ENCODE measurements at regions of chr6 and their contacts with region 1.

Region 1: GRCh38 chr6:106077170-106077569 is 9.0 kb upstream of the PRDM1 start:
- DNase-seq: no peak
- H3K4me3 ChIP-seq: no peak overlapping the region
- CTCF ChIP-seq: no peak

Region 2: GRCh38 chr6:106005013-106005412 is 72.2 kb before region 1 on chr6:
- in situ Hi-C with region 1: loop called (anchors 5 kb)
- DNase-seq: no peak
- H3K4me3 ChIP-seq: no peak overlapping the region
- CTCF ChIP-seq: no peak

Region 3: GRCh38 chr6:106128981-106129781 is 52.0 kb after region 1 on chr6:
- in situ Hi-C with region 1: no loop called
- DNase-seq: peak; percentile 78
- H3K4me3 ChIP-seq: no peak overlapping the region
- CTCF ChIP-seq: no peak

Region 4: DNA sequence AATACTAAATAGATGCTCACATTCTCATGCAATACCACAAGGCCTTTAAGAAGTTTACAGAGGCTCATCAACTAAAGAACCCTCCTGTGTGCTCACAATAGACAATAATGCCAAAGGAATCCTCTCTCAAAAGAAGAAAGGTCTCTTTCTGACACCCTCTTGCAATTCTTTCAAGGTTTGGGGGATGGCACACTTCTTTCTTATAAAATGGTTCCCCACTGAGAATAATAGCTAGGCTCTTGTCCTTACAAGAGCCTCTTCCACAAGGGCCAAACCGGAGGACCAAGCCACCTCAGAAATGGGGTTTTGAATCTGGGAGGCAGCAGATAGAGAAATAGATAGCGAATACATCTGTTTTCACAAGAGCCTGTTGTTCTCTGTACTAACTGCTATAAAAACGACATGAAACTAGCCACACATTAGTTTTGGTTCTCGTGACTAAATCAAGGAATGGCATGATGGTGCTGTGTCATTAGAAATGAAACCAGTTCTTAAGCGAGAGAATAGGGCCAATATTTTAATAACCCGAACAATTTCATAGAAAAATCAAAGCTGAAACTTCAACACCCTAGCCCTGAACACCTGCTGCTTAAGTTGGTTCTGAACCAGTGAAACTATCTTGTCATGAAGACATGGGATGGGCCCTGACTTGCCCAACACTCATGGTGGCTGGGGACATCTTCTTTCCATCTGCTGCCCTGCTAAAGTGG is 90.1 kb after region 1 on chr6:
- in situ Hi-C with region 1: no loop called
- DNase-seq: no peak
- H3K4me3 ChIP-seq: no peak overlapping the region
- CTCF ChIP-seq: no peak

Measured in astrocyte of the cerebellum (primary cell).